ENCODE measurements at regions of chr7 and their contacts with region 1.

Region 1: DNA sequence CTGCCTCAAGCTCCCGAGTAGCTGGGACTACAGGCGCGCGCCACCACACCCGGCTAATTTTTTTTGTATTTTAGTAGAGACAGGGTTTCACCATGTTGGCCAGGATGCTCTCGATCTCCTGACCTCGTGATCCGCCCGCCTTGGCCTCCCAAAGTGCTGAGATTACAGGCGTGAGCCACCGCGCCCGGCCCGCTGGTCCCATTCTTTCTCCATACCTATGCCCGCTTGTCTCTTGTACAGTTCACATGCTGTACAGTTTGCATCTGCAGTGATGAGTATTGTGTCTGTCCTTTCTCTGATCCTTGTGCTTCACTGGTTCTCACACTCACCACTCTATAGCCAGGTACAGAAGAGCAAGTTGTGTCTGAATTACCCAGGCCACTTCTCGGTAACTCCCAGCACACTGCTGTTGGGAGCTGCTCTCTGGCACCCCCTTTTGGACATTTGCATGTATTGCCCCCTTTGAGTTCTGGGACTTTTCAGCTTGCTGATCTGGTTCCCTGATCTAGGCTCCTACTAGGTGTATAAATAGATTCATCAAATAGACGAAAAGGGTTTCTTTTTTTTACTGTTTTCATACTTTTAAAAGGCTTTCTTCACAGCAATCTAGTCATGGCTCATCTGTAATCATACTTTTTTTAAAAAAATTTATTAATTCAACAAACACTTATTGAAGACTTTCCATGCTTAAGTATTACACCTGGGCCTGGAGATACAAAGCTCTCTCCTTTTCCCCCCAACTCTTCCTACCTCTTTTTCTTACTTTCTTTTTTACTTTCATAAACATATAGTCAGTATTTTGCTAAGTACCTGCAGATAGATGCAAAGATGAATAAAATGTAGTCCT is 53.5 kb downstream of the AOAH start:
- DNase-seq: peak; percentile 56 to 64
- ATAC-seq: peak; percentile 88 to 96
- H3K4me3 ChIP-seq: no peak overlapping the region
- H3K27ac ChIP-seq: no peak overlapping the region
- H3K4me1 ChIP-seq: 0 out of 3 replicates have a peak, but pooled peaks cover 6% of the 10 kb centered on the region
- CTCF ChIP-seq: peak; percentile 84
- EP300 ChIP-seq: no peak
- POLR2A ChIP-seq: no peak
- RAD21 ChIP-seq: peak; percentile 86 to 93

Region 2: DNA sequence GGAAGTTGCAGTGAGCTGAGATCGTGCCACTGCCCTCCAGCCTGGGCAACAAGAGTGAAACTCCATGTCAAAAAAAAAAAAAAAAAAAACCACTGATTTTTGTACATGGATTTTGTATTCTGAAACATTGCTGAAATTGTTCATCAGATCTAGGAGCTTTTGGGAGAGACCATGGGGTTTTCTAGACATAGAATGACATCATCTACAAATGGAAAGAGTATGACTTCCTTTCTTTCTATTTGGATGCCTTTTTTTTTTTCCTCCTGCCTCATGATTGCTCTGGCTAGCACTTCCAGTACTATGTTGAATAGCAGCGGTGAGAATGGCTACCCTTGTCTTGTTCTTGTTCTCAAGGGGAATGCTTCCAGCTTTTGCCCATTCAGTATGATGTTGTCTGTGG is 192.1 kb before region 1 on chr7:
- CTCF ChIA-PET with region 1: interaction called, 261 read pairs
- POLR2A ChIA-PET with region 1: no interaction called
- DNase-seq: no peak
- ATAC-seq: no peak
- H3K4me3 ChIP-seq: no peak overlapping the region
- H3K27ac ChIP-seq: no peak overlapping the region
- H3K4me1 ChIP-seq: no peaks in the 10 kb centered on the region
- CTCF ChIP-seq: no peak
- EP300 ChIP-seq: no peak
- POLR2A ChIP-seq: no peak
- RAD21 ChIP-seq: no peak

Region 3: DNA sequence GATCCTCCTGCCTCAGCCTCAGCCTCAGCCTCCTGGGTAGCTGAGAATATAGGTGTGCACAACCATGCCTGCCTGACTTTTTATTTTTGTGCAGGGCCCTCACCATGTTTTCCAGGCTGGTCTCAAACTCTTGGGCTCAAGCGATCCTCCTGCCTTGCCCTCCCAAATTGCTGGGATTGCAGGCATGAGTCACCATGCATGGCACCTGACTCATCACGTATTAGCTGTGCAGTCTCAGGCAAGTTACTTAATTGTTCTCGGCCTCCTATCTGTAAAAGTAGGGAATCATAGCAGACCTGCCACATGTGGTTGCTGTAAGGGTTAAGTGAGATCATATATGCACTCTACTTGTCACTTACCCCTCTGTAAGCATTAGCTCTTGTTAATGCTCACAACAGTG is 164.0 kb before region 1 on chr7:
- CTCF ChIA-PET with region 1: interaction called, 22 read pairs
- POLR2A ChIA-PET with region 1: no interaction called
- DNase-seq: peak in 1 of 2 experiments; percentile 27
- ATAC-seq: peak; percentile 63 to 72; a peak in 4 of 6 replicates
- H3K4me3 ChIP-seq: no peak overlapping the region
- H3K27ac ChIP-seq: peak overlapping the region in 1 of 2 experiments; percentile 46; a peak in 2 of 6 replicates
- H3K4me1 ChIP-seq: peaks cover 9% of the 10 kb centered on the region; the same call in 2 of the 3 replicates
- CTCF ChIP-seq: no peak
- EP300 ChIP-seq: no peak
- POLR2A ChIP-seq: no peak
- RAD21 ChIP-seq: no peak

Region 4: DNA sequence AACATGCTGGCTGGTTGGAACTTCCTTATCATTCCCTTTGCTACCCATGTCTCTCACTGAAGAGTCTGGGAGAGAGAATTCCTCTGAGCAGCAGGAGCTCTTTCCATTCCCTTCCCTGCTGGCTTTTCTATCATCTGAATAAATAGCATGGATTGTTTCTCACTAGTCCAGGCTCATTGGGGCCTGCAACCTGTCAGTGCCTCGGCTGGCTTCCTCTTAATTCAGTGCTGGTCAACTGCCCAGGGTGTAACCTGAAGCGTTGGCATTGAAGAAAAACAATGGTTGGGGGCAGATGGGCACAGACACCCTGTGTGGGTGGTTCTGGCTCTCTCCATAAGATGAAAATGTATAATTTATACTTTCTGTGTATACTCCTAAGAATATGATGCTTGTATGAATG is 125.5 kb before region 1 on chr7:
- CTCF ChIA-PET with region 1: interaction called, 12 read pairs
- POLR2A ChIA-PET with region 1: no interaction called
- DNase-seq: no peak
- ATAC-seq: no peak
- H3K4me3 ChIP-seq: no peak overlapping the region
- H3K27ac ChIP-seq: no peak overlapping the region
- H3K4me1 ChIP-seq: no peaks in the 10 kb centered on the region
- CTCF ChIP-seq: no peak
- EP300 ChIP-seq: no peak
- POLR2A ChIP-seq: no peak
- RAD21 ChIP-seq: no peak

Region 5: GRCh38 chr7:36659172-36659516 is 11.7 kb before region 1 on chr7:
- CTCF ChIA-PET with region 1: interaction called, 35 read pairs
- POLR2A ChIA-PET with region 1: no interaction called
- DNase-seq: peak; percentile 14 to 68
- ATAC-seq: peak; percentile 82 to 91
- H3K4me3 ChIP-seq: no peak overlapping the region
- H3K27ac ChIP-seq: peak overlapping the region; percentile 57 to 80
- H3K4me1 ChIP-seq: peaks cover 46% of the 10 kb centered on the region
- CTCF ChIP-seq: no peak
- EP300 ChIP-seq: no peak
- POLR2A ChIP-seq: no peak
- RAD21 ChIP-seq: no peak

Region 6: GRCh38 chr7:36840904-36841303 is 170.1 kb after region 1 on chr7:
- CTCF ChIA-PET with region 1: no interaction called
- POLR2A ChIA-PET with region 1: no interaction called
- DNase-seq: no peak
- ATAC-seq: no peak
- H3K4me3 ChIP-seq: no peak overlapping the region
- H3K27ac ChIP-seq: no peak overlapping the region
- H3K4me1 ChIP-seq: no peaks in the 10 kb centered on the region
- CTCF ChIP-seq: no peak
- EP300 ChIP-seq: no peak
- POLR2A ChIP-seq: no peak
- RAD21 ChIP-seq: no peak

Region 7: DNA sequence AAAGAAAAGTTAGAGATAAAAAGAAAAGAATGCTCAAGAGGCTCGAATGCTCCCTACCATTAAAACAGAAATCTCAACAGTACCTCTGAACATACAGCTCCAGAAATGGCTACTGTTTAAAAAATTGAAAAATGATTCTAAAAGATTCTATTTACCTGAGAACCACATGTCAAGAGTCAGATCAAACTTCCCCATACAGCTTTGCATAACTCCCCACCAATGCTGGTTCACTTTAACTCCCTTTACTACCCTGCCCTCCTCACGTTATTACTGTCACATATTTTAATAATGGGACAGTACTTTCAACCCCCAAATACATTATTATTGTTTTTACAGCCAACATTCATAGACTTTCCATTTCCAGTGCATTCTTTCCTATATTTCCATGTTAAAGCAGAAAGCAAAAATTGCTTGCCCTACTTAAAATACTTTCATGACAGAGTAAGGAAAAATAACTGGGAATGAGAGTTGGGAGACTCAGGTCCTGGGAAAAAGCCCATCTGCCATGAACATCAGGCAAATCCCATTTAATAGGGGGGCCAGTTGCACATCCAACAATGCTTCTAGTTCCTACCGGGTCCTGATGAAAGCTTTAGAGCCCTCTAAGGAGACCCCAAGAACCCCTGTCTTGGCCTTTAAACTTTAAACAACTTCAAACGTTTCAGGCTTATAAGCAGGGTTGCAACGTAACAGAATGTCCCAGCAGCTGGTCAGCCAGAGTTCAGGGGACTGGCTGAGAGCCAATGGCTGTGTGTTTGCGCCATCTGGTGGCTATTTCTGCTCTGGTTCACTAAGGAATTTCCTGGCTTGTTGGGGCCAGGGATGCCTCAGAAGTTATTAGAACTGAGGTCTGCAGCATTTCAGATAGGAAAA is 530.4 kb after region 1 on chr7:
- CTCF ChIA-PET with region 1: interaction called, 10 read pairs
- POLR2A ChIA-PET with region 1: no interaction called
- DNase-seq: peak; percentile 70 to 84
- ATAC-seq: peak; percentile 85 to 92
- H3K4me3 ChIP-seq: no peak overlapping the region
- H3K27ac ChIP-seq: peak overlapping the region in 1 of 2 experiments; percentile 31; a peak in 1 of 6 replicates
- H3K4me1 ChIP-seq: peaks cover 5% of the 10 kb centered on the region; the same call in 1 of the 3 replicates
- CTCF ChIP-seq: peak; percentile 84
- EP300 ChIP-seq: no peak
- POLR2A ChIP-seq: no peak
- RAD21 ChIP-seq: peak; percentile 76 to 79

Measured in A549 (cell line).